Activated naive CD4-positive, alpha-beta T cell treated with anti-CD3 and anti-CD28 coated beads, Interleukin-2, amount 10 ng/mL, durations not matched to agents 7 days and 5 days (primary cell): ENCODE measurements at regions of chrX and their contacts with region 1.

Region 1: DNA sequence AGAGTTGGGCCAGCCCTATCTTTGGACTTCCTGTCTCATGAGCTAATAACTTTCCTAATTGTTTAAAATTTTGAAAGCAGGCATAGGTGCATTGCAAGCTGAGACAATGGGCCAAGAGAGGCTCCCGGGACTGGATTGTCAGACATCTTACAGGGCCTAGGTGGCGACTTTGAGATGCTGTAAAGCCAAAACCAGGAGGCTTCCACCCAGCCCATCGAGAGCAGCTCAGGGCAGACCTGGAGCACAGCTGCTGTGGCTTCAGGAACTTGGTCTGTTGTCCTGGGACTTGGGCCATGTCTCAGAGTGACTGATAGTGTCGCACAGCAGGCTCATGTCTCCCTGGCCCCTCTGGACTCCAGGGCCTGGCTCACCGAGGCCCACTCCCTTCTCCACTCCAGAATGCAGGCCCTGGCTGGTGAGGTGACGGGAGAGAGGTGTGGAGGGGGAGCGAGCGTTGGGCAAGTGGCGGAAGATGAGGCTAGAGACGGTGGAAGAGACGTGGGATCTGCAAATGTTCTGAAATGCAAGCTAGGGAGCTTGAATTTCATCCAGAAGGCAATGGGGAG is 24.1 kb upstream of the MTM1 start:
- DNase-seq: peak; percentile 34
- H3K4me3 Mint-ChIP-seq: no peak overlapping the region
- H3K27ac Mint-ChIP-seq: no peak overlapping the region
- H3K4me1 Mint-ChIP-seq: peaks cover 33% of the 10 kb centered on the region
- H3K27me3 Mint-ChIP-seq: no peaks in the 10 kb centered on the region

Region 2: GRCh38 chrX:150476181-150476699 is 68.1 kb before region 1 on chrX:
- CTCF ChIA-PET with region 1: no interaction called
- DNase-seq: no peak
- H3K4me3 Mint-ChIP-seq: no peak overlapping the region
- H3K27ac Mint-ChIP-seq: peak overlapping the region; percentile 29
- H3K4me1 Mint-ChIP-seq: peaks cover 50% of the 10 kb centered on the region
- H3K27me3 Mint-ChIP-seq: no peaks in the 10 kb centered on the region

Region 3: GRCh38 chrX:150587585-150588503 is 43.5 kb after region 1 on chrX:
- CTCF ChIA-PET with region 1: interaction called, 11 read pairs
- DNase-seq: peak; percentile 53
- H3K4me3 Mint-ChIP-seq: no peak overlapping the region
- H3K27ac Mint-ChIP-seq: no peak overlapping the region
- H3K4me1 Mint-ChIP-seq: peaks cover 7% of the 10 kb centered on the region
- H3K27me3 Mint-ChIP-seq: no peaks in the 10 kb centered on the region

Region 4: DNA sequence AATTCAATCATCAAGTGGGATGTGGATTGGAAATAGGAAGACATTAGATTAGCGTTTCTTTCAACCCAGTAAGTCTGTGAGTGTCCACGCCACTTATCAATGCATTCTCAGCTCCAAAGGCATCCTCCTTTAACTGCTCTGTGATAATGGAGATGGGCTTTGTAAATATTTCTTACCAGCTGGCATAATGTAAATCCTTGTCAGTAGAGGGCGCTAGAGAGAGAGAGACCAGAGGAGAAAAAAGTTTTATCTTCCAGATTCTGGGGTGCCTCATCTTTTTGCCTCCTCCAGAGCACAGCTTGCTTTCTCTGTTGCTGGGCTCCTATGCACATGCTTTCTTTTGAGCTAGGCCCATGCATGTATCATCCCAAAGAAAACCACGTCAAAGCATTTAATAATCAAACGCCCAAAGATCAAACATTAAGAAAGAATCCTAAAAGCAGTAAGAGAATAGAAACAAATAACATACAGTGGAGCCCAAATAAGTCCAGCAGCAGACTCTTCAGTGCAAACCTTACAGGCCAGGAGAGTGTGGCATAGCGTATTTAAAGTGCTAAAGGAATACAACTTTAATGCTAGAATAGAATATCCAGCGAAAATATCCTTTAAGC is 139.3 kb after region 1 on chrX:
- CTCF ChIA-PET with region 1: interaction called, 13 read pairs
- DNase-seq: no peak
- H3K4me3 Mint-ChIP-seq: no peak overlapping the region
- H3K27ac Mint-ChIP-seq: no peak overlapping the region
- H3K4me1 Mint-ChIP-seq: peaks cover 6% of the 10 kb centered on the region
- H3K27me3 Mint-ChIP-seq: no peaks in the 10 kb centered on the region